WTC11 (cell line): ENCODE measurements at regions of chr9 and their contacts with region 1.

Region 1: GRCh38 chr9:38392235-38393127 is at the start of gene ALDH1B1:
- DNase-seq: peak; percentile 91
- ATAC-seq: peak; percentile 99
- H3K4me3 Mint-ChIP-seq: peak within 1 kb of the TSS; percentile 91
- H3K27ac Mint-ChIP-seq: peak within 1 kb of the TSS; percentile 65
- H3K4me1 Mint-ChIP-seq: peaks cover 25% of the 10 kb centered on the region
- H3K27me3 Mint-ChIP-seq: peaks cover 44% of the 10 kb centered on the region
- CTCF ChIP-seq: no peak
- total RNA-seq, gene ALDH1B1: 55.5 to 64.6 TPM (median 61.4 TPM) in 3 replicates

Region 2: DNA sequence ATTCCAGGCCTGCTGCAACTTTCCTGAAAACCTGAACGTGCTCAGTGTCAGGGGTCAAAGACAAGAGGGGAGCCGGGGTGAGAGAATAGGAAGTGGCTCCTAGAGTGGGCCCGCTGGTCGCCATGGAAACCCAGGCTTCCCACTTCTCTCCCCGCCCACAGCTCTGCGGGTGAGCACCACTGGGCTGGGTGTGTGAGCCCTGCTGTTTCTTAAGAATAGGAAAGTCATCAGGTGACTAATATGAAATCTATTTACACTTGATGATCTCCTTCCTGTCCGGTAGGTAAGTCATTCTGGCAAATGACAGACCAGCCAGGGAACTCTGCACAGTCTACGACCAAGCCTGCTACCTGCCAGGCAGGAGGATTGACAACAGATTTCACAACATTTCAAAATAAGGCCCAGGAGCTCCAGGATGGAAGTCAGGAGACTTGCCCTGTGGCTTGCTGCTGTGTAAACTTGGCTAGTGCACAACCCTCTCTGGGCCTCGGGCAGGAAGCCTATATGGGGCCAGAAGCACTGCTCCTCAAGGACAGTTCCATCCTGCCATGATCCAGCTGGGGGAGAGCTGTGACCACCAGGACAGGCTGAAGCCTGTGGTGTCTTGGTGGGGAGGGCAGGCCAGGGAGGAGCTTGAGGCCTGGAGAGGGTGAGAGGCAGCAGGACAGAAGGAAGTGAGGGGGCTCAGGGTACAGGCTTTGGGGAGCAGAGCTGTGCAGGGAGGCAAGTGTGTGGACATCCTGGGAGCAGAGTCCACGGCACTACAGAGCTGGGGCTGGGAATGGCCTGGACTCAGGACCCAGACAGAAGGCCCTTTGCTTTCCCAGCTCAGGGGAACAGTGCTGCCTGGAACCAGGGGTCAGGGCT is 384.1 kb before region 1 on chr9:
- CTCF ChIA-PET with region 1: no interaction called
- POLR2A ChIA-PET with region 1: no interaction called
- DNase-seq: peak; percentile 34
- ATAC-seq: peak; percentile 40
- H3K4me3 Mint-ChIP-seq: 0 out of 2 replicates have a peak overlapping the region, but pooled peaks have one; percentile 0
- H3K27ac Mint-ChIP-seq: peak overlapping the region; percentile 95
- H3K4me1 Mint-ChIP-seq: peaks cover 45% of the 10 kb centered on the region
- H3K27me3 Mint-ChIP-seq: no peaks in the 10 kb centered on the region
- CTCF ChIP-seq: no peak

Region 3: GRCh38 chr9:38233343-38233742 is 159.1 kb before region 1 on chr9:
- CTCF ChIA-PET with region 1: no interaction called
- POLR2A ChIA-PET with region 1: no interaction called
- DNase-seq: no peak
- ATAC-seq: no peak
- H3K4me3 Mint-ChIP-seq: no peak overlapping the region
- H3K27ac Mint-ChIP-seq: no peak overlapping the region
- H3K4me1 Mint-ChIP-seq: peaks cover 14% of the 10 kb centered on the region
- H3K27me3 Mint-ChIP-seq: peaks cover 99% of the 10 kb centered on the region
- CTCF ChIP-seq: no peak

Region 4: GRCh38 chr9:38374847-38375571 is 17.5 kb before region 1 on chr9:
- CTCF ChIA-PET with region 1: interaction called, 12 read pairs
- POLR2A ChIA-PET with region 1: no interaction called
- DNase-seq: no peak
- ATAC-seq: no peak
- H3K4me3 Mint-ChIP-seq: no peak overlapping the region
- H3K27ac Mint-ChIP-seq: no peak overlapping the region
- H3K4me1 Mint-ChIP-seq: peaks cover 8% of the 10 kb centered on the region
- H3K27me3 Mint-ChIP-seq: peaks cover 87% of the 10 kb centered on the region
- CTCF ChIP-seq: no peak

Region 5: GRCh38 chr9:38651400-38652042 is 259.0 kb after region 1 on chr9:
- CTCF ChIA-PET with region 1: no interaction called
- POLR2A ChIA-PET with region 1: no interaction called
- DNase-seq: no peak
- ATAC-seq: no peak
- H3K4me3 Mint-ChIP-seq: no peak overlapping the region
- H3K27ac Mint-ChIP-seq: no peak overlapping the region
- H3K4me1 Mint-ChIP-seq: no peaks in the 10 kb centered on the region
- H3K27me3 Mint-ChIP-seq: no peaks in the 10 kb centered on the region
- CTCF ChIP-seq: no peak